ENCODE measurements at regions of chr11 and their contacts with region 1.

Region 1: GRCh38 chr11:22169833-22170232 is 23.1 kb upstream of the ANO5 start:
- DNase-seq: no peak
- ATAC-seq: no peak
- H3K4me3 ChIP-seq: no peak overlapping the region
- H3K27ac ChIP-seq: no peak overlapping the region
- H3K4me1 ChIP-seq: no peaks in the 10 kb centered on the region
- H3K27me3 ChIP-seq: no peaks in the 10 kb centered on the region

Region 2: DNA sequence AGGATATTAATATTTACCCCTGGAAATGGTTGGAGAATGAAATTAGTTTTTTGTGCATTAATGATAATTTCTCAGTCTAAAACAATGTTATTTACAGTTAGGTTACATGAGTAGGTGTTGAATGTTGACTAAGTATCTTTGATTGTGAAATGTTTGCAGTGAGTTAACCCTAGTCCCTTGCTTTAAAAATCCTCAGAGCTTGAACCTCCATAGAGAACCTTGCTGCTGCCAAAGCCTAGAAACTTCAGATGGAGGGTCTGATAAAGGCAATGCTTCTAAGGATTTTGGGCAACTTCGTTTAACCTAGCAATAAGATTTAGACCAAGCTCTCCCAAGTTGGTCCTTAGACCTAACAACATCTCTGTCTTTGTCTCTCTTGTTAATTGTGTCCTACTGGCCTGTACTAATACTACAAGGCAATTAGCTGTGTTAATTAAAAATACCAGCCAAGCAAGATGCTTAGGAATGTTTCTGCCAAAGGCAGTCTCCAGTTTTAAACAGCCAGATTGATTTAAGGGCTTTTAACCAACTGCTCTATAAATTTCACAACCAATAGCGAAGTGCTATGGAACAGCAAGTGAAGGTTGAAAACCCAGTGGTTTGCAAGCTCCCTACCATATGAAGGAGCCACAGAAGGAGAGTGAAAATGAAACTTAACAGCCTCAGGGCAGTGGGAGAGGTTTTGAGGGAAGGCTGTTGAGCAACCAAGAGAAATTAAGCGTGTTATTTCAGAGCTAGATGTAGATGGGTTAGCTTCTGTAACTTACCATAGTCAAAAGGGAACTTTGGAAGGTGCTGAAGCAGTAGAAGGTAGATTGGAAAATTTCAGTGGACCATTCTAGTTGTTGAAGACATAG is 272.9 kb before region 1 on chr11:
- intact Hi-C with region 1: no loop called
- DNase-seq: no peak
- ATAC-seq: no peak
- H3K4me3 ChIP-seq: no peak overlapping the region
- H3K27ac ChIP-seq: no peak overlapping the region
- H3K4me1 ChIP-seq: no peaks in the 10 kb centered on the region
- H3K27me3 ChIP-seq: no peaks in the 10 kb centered on the region

Region 3: DNA sequence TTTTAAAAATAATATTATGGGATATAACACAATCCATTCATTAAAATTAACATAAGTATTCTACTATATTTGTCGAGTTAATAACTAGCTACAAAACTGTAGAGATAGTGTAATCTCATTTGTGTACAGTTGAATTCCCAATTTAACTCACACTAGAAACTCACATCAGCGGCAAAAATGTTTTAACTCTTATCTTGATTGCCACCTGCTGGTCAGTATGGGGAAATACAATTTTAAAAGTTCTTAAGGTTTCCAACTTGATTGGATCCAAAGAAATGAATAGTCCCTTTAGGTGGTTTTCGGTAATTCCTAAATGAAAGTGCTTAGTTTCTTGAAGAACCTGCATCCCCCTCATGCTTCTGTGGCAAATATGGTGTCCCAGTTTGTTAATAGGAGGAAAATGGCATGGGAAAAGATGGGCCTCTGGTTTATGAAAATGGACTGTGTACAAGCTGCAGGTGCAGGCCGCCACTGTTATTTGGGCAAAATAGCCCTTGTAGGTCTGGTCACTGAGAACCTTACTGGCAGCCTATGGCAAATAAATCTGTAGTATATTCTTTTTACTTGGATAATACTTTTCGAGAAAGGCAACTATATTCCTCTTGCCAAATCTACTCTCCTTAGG is 134.6 kb after region 1 on chr11:
- intact Hi-C with region 1: loop called (anchors 5 to 10 kb)
- DNase-seq: no peak
- ATAC-seq: no peak
- H3K4me3 ChIP-seq: no peak overlapping the region
- H3K27ac ChIP-seq: no peak overlapping the region
- H3K4me1 ChIP-seq: no peaks in the 10 kb centered on the region
- H3K27me3 ChIP-seq: no peaks in the 10 kb centered on the region

Region 4: GRCh38 chr11:22317656-22318055 is 147.8 kb after region 1 on chr11:
- intact Hi-C with region 1: loop called in 1 of 2 experiments (anchors 5 kb)
- DNase-seq: no peak
- ATAC-seq: no peak
- H3K4me3 ChIP-seq: no peak overlapping the region
- H3K27ac ChIP-seq: no peak overlapping the region
- H3K4me1 ChIP-seq: no peaks in the 10 kb centered on the region
- H3K27me3 ChIP-seq: no peaks in the 10 kb centered on the region

Measured in aorta (tissue), 5 donors.